Testis (tissue), 5 donors: ENCODE measurements at regions of chr16 and their contacts with region 1.

Region 1: DNA sequence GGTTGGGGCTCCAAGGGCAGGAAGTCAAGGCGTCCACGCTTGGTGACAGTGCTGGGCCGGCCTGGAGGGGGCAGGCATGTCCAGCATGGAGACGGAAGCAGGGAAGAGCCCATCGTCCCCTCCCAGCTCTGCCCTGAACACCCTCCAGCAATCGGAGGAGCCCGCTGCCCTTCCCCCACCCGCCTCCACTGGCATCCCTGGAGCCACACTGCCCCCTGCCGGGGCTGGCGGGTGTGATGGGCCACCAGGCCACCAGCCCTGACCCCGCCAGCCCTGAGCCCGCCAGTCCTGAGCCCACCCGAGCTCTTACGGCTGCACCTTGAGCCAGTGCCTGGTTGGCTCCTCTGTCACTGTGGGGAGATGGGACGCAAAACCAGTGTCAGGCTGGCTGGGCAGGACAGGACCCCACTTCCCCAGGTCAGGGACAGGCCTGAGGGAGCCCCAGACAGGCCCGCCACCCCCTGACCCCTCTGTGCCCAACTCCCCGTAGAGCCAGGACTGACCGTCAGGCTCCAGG is 4.1 kb upstream of the CDH15 start:
- DNase-seq: peak; percentile 85
- H3K4me3 ChIP-seq: no peak overlapping the region
- H3K27ac ChIP-seq: no peak overlapping the region
- H3K4me1 ChIP-seq: peaks cover 8% of the 10 kb centered on the region
- H3K27me3 ChIP-seq: no peaks in the 10 kb centered on the region
- CTCF ChIP-seq: peak; percentile 76 to 87 (median 81)
- POLR2A ChIP-seq: no peak

Region 2: GRCh38 chr16:88737298-88738150 is 430.0 kb before region 1 on chr16:
- intact Hi-C with region 1: loop called (anchors 10 kb)
- DNase-seq: peak; percentile 85
- H3K4me3 ChIP-seq: no peak overlapping the region
- H3K27ac ChIP-seq: no peak overlapping the region
- H3K4me1 ChIP-seq: no peaks in the 10 kb centered on the region
- H3K27me3 ChIP-seq: no peaks in the 10 kb centered on the region
- CTCF ChIP-seq: peak; percentile 98 to 99 (median 99)
- POLR2A ChIP-seq: no peak

Region 3: GRCh38 chr16:89256651-89257254 is 89.3 kb after region 1 on chr16:
- intact Hi-C with region 1: no loop called
- DNase-seq: no peak
- H3K4me3 ChIP-seq: peak overlapping the region; percentile 49 to 54
- H3K27ac ChIP-seq: no peak overlapping the region
- H3K4me1 ChIP-seq: peaks cover 11% of the 10 kb centered on the region
- H3K27me3 ChIP-seq: no peaks in the 10 kb centered on the region
- CTCF ChIP-seq: no peak
- POLR2A ChIP-seq: no peak